WTC11 (cell line): ENCODE measurements at regions of chr17 and their contacts with region 1.

Region 1: GRCh38 chr17:57243171-57243948 is 13.0 kb upstream of the MSI2 start:
- DNase-seq: peak; percentile 83
- ATAC-seq: peak; percentile 92
- H3K4me3 Mint-ChIP-seq: no peak overlapping the region
- H3K27ac Mint-ChIP-seq: no peak overlapping the region
- H3K4me1 Mint-ChIP-seq: peaks cover 6% of the 10 kb centered on the region
- H3K27me3 Mint-ChIP-seq: no peaks in the 10 kb centered on the region; the same call in none of the 2 replicates
- CTCF ChIP-seq: peak; percentile 92

Region 2: DNA sequence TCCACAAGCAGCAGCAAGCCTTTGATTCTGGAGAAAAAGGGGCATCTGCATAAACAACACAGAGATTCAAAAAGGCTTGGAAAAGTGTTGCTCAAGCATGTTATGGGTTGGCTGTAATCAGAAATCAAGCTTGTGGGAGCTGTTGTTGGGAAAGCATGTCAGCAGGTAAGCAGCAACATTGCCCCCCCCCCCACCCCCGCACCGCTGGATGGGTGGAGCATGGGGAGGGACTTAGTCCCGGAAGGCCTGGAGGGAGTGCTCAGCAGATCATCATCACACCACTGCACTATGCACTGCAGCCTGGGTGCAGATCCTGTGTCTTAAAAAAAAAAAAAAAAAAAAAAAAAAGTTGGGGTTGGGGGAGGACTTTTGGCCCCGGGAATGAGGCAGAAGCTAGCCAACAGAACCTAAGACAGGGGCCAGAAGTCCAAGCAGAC is 175.1 kb before region 1 on chr17:
- CTCF ChIA-PET with region 1: no interaction called
- POLR2A ChIA-PET with region 1: no interaction called
- DNase-seq: peak; percentile 38
- ATAC-seq: peak; percentile 89
- H3K4me3 Mint-ChIP-seq: no peak overlapping the region
- H3K27ac Mint-ChIP-seq: no peak overlapping the region
- H3K4me1 Mint-ChIP-seq: peaks cover 48% of the 10 kb centered on the region
- H3K27me3 Mint-ChIP-seq: no peaks in the 10 kb centered on the region
- CTCF ChIP-seq: no peak

Region 3: GRCh38 chr17:57146273-57146672 is 97.1 kb before region 1 on chr17:
- CTCF ChIA-PET with region 1: interaction called, 10 read pairs
- POLR2A ChIA-PET with region 1: no interaction called
- DNase-seq: no peak
- ATAC-seq: no peak
- H3K4me3 Mint-ChIP-seq: no peak overlapping the region
- H3K27ac Mint-ChIP-seq: no peak overlapping the region
- H3K4me1 Mint-ChIP-seq: peaks cover 15% of the 10 kb centered on the region
- H3K27me3 Mint-ChIP-seq: peaks cover 11% of the 10 kb centered on the region; the same call in 1 of the 2 replicates
- CTCF ChIP-seq: no peak

Region 4: GRCh38 chr17:57271821-57272220 is 28.5 kb after region 1 on chr17:
- CTCF ChIA-PET with region 1: interaction called, 18 read pairs
- POLR2A ChIA-PET with region 1: no interaction called
- DNase-seq: no peak
- ATAC-seq: no peak
- H3K4me3 Mint-ChIP-seq: no peak overlapping the region
- H3K27ac Mint-ChIP-seq: no peak overlapping the region
- H3K4me1 Mint-ChIP-seq: peaks cover 21% of the 10 kb centered on the region
- H3K27me3 Mint-ChIP-seq: no peaks in the 10 kb centered on the region
- CTCF ChIP-seq: no peak

Region 5: GRCh38 chr17:57327176-57327970 is 84.0 kb after region 1 on chr17:
- CTCF ChIA-PET with region 1: interaction called, 16 read pairs
- POLR2A ChIA-PET with region 1: no interaction called
- DNase-seq: no peak
- ATAC-seq: no peak
- H3K4me3 Mint-ChIP-seq: no peak overlapping the region
- H3K27ac Mint-ChIP-seq: no peak overlapping the region
- H3K4me1 Mint-ChIP-seq: peaks cover 24% of the 10 kb centered on the region
- H3K27me3 Mint-ChIP-seq: no peaks in the 10 kb centered on the region
- CTCF ChIP-seq: no peak

Region 6: GRCh38 chr17:57408071-57408811 is 164.9 kb after region 1 on chr17:
- CTCF ChIA-PET with region 1: interaction called, 32 read pairs
- POLR2A ChIA-PET with region 1: no interaction called
- DNase-seq: peak; percentile 38
- ATAC-seq: peak; percentile 82
- H3K4me3 Mint-ChIP-seq: peak overlapping the region; percentile 14; the same call in 1 of the 2 replicates
- H3K27ac Mint-ChIP-seq: peak overlapping the region; percentile 87
- H3K4me1 Mint-ChIP-seq: peaks cover 57% of the 10 kb centered on the region
- H3K27me3 Mint-ChIP-seq: no peaks in the 10 kb centered on the region
- CTCF ChIP-seq: no peak

Region 7: DNA sequence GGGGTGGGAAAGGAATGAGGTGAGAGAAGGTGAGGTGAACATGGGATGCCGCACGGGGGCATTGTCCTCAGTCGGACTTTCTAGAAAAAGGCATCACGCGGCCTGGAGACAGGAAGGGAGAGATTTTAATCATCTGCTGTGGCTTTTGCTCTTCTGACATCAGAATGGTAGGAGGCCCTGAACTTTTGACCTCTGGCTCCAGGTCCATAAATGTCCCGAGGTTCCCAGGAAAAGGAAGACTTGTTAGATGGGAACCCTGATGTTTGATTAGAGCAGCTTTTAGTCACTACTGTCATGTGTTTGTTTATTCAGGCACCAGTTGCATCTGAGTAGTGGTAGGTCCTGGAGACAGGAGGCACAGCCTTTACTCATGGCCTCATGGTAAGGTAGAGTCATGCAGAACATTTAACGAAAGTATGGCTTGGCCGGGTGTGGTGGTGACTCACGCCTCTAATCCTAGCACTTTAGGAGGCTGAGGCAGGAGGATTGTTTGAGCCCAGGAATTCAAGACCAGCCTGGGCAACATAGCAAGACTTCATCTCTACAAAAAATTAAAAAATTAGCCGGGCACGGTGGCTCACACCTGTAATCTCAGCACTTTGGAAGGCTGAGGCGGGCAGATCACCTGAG is 216.0 kb after region 1 on chr17:
- CTCF ChIA-PET with region 1: interaction called, 13 read pairs
- POLR2A ChIA-PET with region 1: no interaction called
- DNase-seq: no peak
- ATAC-seq: no peak
- H3K4me3 Mint-ChIP-seq: no peak overlapping the region
- H3K27ac Mint-ChIP-seq: no peak overlapping the region
- H3K4me1 Mint-ChIP-seq: peaks cover 42% of the 10 kb centered on the region
- H3K27me3 Mint-ChIP-seq: no peaks in the 10 kb centered on the region
- CTCF ChIP-seq: no peak

Region 8: GRCh38 chr17:57747221-57748017 is 504.1 kb after region 1 on chr17:
- CTCF ChIA-PET with region 1: interaction called, 13 read pairs
- POLR2A ChIA-PET with region 1: no interaction called
- DNase-seq: no peak
- ATAC-seq: peak; percentile 79
- H3K4me3 Mint-ChIP-seq: no peak overlapping the region
- H3K27ac Mint-ChIP-seq: no peak overlapping the region
- H3K4me1 Mint-ChIP-seq: peaks cover 4% of the 10 kb centered on the region
- H3K27me3 Mint-ChIP-seq: no peaks in the 10 kb centered on the region; the same call in 1 of the 2 replicates
- CTCF ChIP-seq: peak; percentile 43